ENCODE measurements at regions of chr12 and their contacts with region 1.

Region 1: GRCh38 chr12:27644158-27644845 is 51.9 kb upstream of the REP15 start:
- DNase-seq: no peak
- H3K4me3 ChIP-seq: no peak overlapping the region
- H3K27ac ChIP-seq: no peak overlapping the region
- H3K4me1 ChIP-seq: peaks cover 5% of the 10 kb centered on the region
- H3K27me3 ChIP-seq: no peaks in the 10 kb centered on the region
- CTCF ChIP-seq: no peak
- POLR2A ChIP-seq: no peak

Region 2: DNA sequence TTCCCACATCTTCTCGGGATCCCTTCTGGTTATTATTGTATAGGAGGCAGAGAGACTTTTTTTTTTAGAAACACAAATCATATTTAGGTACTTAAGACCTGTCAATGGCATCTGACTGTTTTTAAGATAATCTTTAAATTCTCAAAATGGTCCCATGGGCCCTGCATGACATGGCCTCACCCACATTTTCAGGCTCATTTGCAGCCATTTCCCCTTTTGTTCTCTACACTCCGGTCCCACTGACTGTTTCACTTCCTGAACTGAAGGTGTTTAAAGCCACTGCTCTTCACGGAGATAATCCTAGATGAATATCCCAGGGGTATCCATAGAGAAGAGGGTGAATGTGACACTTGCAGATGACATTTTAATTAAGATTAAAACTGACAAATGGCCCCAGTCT is 549.6 kb before region 1 on chr12:
- intact Hi-C with region 1: no loop called
- DNase-seq: no peak
- H3K4me3 ChIP-seq: no peak overlapping the region
- H3K27ac ChIP-seq: no peak overlapping the region
- H3K4me1 ChIP-seq: no peaks in the 10 kb centered on the region
- H3K27me3 ChIP-seq: no peaks in the 10 kb centered on the region
- CTCF ChIP-seq: no peak
- POLR2A ChIP-seq: no peak

Region 3: DNA sequence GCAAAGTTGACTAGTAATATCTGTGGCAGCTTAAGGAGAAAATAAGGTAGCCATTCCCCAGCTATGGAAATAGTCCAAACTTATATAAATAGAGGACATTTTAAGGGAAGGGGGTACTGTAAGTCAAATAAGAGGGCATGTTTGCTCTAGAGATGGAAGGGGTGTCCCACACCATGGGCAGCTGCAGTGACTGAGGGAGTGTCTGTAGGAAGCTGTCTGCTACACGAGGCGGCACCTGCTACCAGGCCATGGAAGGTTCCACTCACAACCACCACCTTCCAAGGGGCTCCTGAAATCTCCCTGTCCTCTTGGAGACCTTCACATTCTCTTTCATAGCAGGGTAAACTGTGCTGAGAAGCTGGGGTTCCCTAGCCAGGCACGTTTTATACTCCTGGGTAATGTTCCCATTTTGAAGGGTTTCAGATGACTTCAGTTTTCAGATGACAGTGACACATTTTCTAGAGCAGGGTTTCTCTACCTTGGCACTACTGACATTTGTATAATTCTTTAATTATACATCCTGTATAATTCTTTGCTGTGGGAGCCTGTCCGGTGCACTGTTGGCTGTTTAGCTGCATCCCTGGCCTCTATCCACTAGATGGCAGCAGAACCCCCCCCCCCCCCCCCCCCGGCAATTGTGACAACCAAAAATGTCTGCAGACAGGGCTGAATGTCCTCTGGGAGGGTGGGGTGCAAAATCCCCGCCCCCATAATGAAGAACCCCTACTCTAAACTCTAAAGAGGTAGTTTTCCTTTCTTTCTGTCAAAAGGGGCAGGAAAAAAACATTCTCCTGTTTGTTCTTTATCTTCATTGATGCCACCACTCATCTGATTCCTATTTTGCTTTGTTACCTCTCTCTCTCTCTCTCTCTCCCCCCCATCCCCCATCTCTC is 209.4 kb before region 1 on chr12:
- intact Hi-C with region 1: loop called (anchors 10 kb)
- DNase-seq: peak; percentile 43
- H3K4me3 ChIP-seq: no peak overlapping the region
- H3K27ac ChIP-seq: no peak overlapping the region
- H3K4me1 ChIP-seq: peaks cover 4% of the 10 kb centered on the region
- H3K27me3 ChIP-seq: no peaks in the 10 kb centered on the region
- CTCF ChIP-seq: peak in 1 of 3 experiments; percentile 5
- POLR2A ChIP-seq: no peak

Measured in testis (tissue), 5 donors.